ENCODE measurements at regions of chr19 and their contacts with region 1.

Region 1: GRCh38 chr19:42563352-42564210 is 31.1 kb downstream of the CEACAM8 start:
- H3K4me3 Mint-ChIP-seq: no peak overlapping the region
- H3K27ac Mint-ChIP-seq: no peak overlapping the region
- H3K4me1 Mint-ChIP-seq: peaks cover 50% of the 10 kb centered on the region
- H3K27me3 Mint-ChIP-seq: peaks cover 76% of the 10 kb centered on the region

Region 2: DNA sequence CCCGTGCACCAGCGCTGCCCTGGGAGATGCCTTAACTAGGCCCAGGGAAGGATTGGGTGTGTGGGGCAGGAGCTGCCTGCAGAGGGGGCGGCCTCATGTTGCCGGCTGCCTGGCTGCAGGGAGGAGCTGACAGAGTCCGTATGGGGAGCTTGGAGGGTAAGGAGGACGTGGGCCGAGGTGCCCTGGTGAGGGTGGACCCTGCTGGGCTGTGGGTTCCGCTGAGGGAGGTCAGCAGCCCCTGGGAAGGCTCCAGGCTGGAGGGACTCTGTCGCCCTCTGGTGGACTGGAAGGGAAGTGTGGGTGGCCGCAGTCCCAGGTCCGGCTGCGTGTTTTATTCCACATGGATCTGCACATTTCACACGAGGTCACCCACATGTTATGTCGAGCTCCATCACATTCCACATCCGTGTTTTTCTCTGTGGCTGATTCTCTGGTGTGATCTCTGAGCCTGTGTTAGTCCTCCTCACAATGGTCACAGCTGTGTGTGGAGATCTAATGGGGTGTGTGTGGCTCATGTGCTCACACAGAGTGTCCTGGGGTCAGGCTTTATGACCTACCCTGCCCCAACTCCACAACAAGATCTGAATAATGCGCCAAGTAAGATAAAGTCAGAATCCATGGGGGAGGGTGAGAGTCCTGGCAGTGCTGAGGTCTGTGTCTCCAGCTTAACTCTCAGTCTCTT is 33.0 kb after region 1 on chr19:
- intact Hi-C with region 1: loop called (anchors 1 kb)
- H3K4me3 Mint-ChIP-seq: no peak overlapping the region
- H3K27ac Mint-ChIP-seq: no peak overlapping the region
- H3K4me1 Mint-ChIP-seq: peaks cover 23% of the 10 kb centered on the region
- H3K27me3 Mint-ChIP-seq: peaks cover 71% of the 10 kb centered on the region

Region 3: GRCh38 chr19:42683917-42684513 is 120.4 kb after region 1 on chr19:
- intact Hi-C with region 1: no loop called
- H3K4me3 Mint-ChIP-seq: no peak overlapping the region
- H3K27ac Mint-ChIP-seq: no peak overlapping the region
- H3K4me1 Mint-ChIP-seq: no peaks in the 10 kb centered on the region
- H3K27me3 Mint-ChIP-seq: no peaks in the 10 kb centered on the region

Measured in dendritic cell treated with granulocyte-macrophage colony-stimulating factor and Interleukin-4, amounts not matched to agents 40 ng/mL and 50 ng/mL, for 4 days (primary cell).